AG04450 (cell line): ENCODE measurements at regions of chr1 and their contacts with region 1.

Region 1: DNA sequence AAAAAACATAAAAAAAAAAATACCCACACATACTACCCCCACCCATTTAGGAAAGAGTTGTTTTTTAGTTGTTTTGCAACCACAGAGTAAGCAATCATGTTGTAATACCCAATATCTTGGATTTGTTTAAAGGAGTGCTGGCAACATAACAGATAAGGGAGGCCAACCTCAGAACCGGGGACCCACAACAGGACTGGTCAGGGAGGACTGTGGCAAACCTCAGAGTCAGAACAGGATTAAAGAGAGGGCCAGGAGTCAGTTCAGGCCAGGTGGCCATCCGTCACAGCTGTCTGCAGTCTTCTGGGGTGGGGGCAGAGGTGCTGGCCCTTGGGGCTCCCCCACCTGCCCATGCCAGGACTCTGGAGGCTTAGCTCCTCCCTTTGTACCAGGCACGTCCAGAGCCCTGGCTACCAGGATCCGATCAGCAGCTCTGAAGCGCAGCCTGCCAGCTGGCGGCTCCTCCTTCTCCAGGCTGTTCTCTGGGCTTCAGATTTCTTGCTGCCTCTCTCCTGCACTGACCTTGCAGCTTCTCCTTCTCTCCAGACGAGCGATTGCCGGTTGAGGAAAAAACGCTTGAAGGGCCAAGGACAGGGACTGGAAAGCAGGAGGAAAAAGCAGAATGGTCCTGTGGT is 7.9 kb downstream of the H6PD start:
- DNase-seq: no peak
- H3K4me3 ChIP-seq: no peak overlapping the region
- H3K27ac ChIP-seq: no peak overlapping the region
- H3K27me3 ChIP-seq: no peaks in the 10 kb centered on the region
- CTCF ChIP-seq: no peak

Region 2: DNA sequence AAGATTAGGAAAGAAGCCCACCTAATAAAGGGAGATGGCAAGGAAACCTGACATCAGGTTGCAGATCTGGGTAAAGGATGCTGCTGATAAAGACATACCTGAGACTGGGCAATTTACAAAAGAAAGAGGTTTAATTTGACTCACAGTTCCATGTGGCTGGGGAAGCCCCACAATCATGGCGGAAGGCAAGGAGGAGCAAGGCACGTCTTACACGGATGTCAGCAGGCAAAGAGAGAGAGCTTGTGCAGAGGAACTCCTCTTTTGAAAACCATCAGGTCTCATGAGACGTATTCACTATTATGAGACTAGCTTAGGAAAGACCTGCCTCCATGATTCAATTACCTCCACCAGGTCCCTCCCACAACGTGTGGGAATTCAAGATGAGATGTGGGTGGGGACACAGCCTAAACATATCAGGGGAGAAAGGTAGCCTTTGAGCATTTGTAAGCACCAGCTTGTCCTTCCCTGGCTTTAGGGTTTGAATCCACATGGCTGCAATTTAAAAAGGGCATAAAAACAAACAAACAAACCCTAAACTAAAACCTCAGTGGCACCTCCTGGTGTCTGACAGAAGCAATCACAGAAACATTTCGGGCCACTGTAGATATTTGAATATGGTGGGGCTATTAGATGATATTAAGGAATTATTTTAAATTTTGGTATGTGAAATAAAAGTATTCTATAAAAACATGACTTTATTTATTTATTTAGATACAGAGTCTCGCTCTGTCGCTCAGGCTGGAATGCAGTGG is 249.3 kb before region 1 on chr1:
- CTCF ChIA-PET with region 1: no interaction called
- POLR2A ChIA-PET with region 1: no interaction called
- DNase-seq: no peak
- H3K4me3 ChIP-seq: no peak overlapping the region
- H3K27ac ChIP-seq: no peak overlapping the region
- H3K27me3 ChIP-seq: peaks cover 2% of the 10 kb centered on the region
- CTCF ChIP-seq: peak; percentile 26

Region 3: DNA sequence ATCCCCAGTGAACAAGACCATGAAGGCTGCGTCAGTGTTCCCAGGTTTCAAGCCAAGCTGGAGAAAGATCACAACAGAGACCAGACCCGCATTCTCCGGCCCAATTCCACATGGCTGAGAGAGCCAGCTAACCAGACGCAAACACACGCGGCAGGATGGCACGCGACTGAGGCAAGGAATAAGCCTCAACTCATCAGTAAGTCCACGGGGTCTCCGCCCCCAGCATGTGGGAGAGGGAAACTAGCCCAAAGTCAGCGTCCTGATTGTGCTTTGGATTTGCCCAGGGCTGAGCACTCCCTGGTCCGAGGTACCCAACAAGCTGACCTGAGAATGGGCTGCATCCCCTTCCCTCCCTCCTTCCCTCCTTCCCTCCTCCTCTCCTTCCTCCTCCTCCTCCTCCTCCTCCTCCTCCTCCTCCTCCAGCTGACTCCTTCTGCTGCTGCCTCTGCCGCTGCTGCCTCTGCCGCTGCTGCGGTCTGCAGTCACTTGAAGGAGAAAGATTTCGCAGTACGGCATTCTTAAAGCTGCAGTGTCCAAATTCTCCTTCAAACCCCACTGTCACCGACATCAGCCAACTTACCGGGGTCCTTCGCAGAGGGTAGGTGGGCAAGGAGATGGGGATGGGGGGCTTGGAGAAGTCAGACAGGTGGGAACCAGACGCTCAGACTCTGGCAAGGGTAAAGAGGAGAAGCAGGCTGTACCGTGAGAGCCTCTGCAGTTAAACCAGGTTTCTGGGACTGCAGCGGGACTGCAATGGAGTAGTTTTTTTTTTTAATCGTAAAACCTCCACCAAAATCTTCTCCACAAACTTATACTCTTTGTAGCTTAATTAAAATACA is 40.8 kb before region 1 on chr1:
- CTCF ChIA-PET with region 1: no interaction called
- POLR2A ChIA-PET with region 1: interaction called, 10 read pairs
- DNase-seq: no peak
- H3K4me3 ChIP-seq: peak overlapping the region; percentile 81
- H3K27ac ChIP-seq: peak overlapping the region; percentile 80
- H3K27me3 ChIP-seq: no peaks in the 10 kb centered on the region
- CTCF ChIP-seq: no peak